PC-9 (cell line): ENCODE measurements at regions of chr3 and their contacts with region 1.

Region 1: DNA sequence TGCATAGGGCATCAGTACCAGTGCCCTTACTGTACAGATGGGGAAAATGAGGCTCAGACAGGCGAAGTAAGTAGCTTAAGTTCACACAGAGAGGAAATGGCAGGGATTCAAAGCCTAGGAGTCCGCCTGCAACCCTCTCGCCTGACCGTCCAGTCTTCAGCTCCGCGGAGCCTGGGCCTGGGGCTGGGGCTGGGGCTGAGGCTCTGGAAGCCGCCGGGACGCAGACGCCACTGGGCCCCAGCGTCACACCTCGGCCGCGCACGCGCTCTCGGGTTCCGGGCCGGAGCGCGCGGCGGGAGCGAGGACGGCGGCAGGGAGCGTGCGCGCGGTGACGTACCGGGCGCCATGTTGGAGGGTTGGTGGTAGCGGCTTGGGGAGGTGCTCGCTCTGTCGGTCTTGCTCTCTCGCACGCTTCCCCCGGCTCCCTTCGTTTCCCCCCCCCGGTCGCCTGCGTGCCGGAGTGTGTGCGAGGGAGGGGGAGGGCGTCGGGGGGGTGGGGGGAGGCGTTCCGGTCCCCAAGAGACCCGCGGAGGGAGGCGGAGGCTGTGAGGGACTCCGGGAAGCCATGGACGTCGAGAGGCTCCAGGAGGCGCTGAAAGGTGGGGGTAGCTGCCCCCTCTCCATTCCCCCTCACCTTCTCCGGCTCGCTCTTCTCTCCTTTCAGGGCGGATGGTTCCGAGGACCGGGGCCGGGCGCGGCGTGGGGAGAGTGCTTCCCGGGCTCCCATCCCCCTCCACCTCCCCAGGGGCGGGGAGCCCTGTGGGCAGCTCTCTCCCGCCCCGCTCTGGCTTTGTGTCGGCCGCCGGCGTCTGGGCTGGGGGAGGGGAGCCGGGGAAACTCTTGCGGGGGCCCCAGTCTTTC is at the start of gene PPP4R2:
- DNase-seq: peak; percentile 45 to 86
- H3K4me3 ChIP-seq: peak within 1 kb of the TSS; percentile 65
- H3K27ac ChIP-seq: peak within 1 kb of the TSS; percentile 54
- H3K4me1 ChIP-seq: peaks cover 21% of the 10 kb centered on the region
- H3K27me3 ChIP-seq: no peaks in the 10 kb centered on the region
- CTCF ChIP-seq: no peak
- total RNA-seq, gene PPP4R2: 63.2 and 97.4 TPM in 2 replicates

Region 2: DNA sequence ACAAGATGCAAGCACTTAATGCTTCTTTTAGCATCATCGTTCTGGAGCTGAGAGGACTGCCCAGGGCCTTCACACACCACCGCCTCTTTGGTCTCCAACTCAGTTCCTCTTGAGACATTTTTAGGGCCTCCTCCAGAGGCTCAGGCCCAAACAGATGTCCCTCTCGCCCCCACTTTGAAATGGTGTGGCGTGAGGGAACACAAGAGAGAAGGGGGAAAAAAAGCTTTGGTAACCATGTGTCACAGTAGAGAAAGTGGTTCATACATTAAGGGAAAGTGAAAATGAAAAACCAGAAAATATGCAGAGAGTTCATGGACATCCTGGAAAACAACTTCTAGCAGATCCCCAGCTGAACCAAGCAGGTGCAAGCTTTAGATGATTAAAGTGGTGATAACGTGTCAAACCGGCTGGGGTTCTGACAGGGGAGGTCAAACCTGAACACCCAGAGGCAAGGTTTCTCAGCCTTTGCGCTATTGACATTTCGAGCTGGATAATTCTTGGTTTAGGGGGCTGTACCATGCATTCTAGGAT is 1380.1 kb before region 1 on chr3:
- CTCF ChIA-PET with region 1: no interaction called
- POLR2A ChIA-PET with region 1: no interaction called
- intact Hi-C with region 1: no loop called
- DNase-seq: no peak
- H3K4me3 ChIP-seq: no peak overlapping the region
- H3K27ac ChIP-seq: no peak overlapping the region
- H3K4me1 ChIP-seq: no peaks in the 10 kb centered on the region
- H3K27me3 ChIP-seq: peaks cover 29% of the 10 kb centered on the region
- CTCF ChIP-seq: no peak

Region 3: DNA sequence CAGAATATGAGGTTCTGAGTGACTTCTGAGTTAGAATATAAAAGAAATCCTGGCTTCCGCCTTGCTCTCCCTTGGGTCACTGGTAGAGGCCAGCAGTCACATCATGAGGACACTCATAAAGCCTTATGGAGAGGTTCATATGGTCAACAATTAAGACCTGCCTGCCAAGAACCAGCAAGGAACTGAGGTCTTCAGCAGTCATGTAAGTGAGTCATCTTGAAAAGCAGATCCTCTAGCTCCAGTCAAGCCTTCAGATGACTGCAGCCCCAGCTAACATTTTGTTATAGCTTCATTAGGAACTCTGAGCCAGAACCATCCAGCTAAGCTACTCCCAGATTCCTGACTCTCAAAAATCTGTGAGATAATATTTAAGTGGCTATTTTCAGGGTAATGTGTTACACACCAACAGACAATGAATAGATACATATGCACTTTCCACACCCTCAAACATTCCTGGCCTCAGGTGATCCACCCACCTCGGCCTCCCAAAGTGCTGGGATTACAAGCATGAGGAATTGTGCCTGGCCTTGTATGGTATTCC is 595.6 kb before region 1 on chr3:
- CTCF ChIA-PET with region 1: no interaction called
- POLR2A ChIA-PET with region 1: no interaction called
- intact Hi-C with region 1: no loop called
- DNase-seq: no peak
- H3K4me3 ChIP-seq: no peak overlapping the region
- H3K27ac ChIP-seq: no peak overlapping the region
- H3K4me1 ChIP-seq: no peaks in the 10 kb centered on the region
- H3K27me3 ChIP-seq: no peaks in the 10 kb centered on the region
- CTCF ChIP-seq: no peak

Region 4: GRCh38 chr3:72938471-72939265 is 58.0 kb before region 1 on chr3:
- CTCF ChIA-PET with region 1: no interaction called
- POLR2A ChIA-PET with region 1: no interaction called
- intact Hi-C with region 1: loop called (anchors 2 kb)
- DNase-seq: peak; percentile 29 to 70
- H3K4me3 ChIP-seq: peak overlapping the region; percentile 24; the same call in 1 of the 2 replicates
- H3K27ac ChIP-seq: no peak overlapping the region
- H3K4me1 ChIP-seq: peaks cover 7% of the 10 kb centered on the region; the same call in 1 of the 2 replicates
- H3K27me3 ChIP-seq: no peaks in the 10 kb centered on the region
- CTCF ChIP-seq: peak; percentile 81

Region 5: GRCh38 chr3:73056014-73056844 is 59.5 kb after region 1 on chr3:
- CTCF ChIA-PET with region 1: interaction called, 4 read pairs
- POLR2A ChIA-PET with region 1: no interaction called
- intact Hi-C with region 1: loop called (anchors 5 kb)
- DNase-seq: peak in 1 of 2 experiments; percentile 46
- H3K4me3 ChIP-seq: no peak overlapping the region
- H3K27ac ChIP-seq: peak overlapping the region; percentile 29; the same call in 1 of the 2 replicates
- H3K4me1 ChIP-seq: no peaks in the 10 kb centered on the region
- H3K27me3 ChIP-seq: no peaks in the 10 kb centered on the region
- CTCF ChIP-seq: peak; percentile 61